ENCODE measurements at regions of chr5 and their contacts with region 1.

Region 1: GRCh38 chr5:142769741-142770631 is at the start of gene ARHGAP26:
- DNase-seq: peak; percentile 93
- ATAC-seq: peak; percentile 96
- H3K4me3 ChIP-seq: peak within 1 kb of the TSS; percentile 87 to 94 (median 94)
- H3K27ac ChIP-seq: peak within 1 kb of the TSS; percentile 62
- H3K4me1 ChIP-seq: peaks cover 44% of the 10 kb centered on the region
- H3K27me3 ChIP-seq: peaks cover 0 to 10% of the 10 kb centered on the region in 2 experiments; a peak in 3 of 5 replicates
- CTCF ChIP-seq: peak; percentile 72
- EP300 ChIP-seq: no peak
- POLR2A ChIP-seq: peak; percentile 81 to 92
- RAD21 ChIP-seq: peak; percentile 79
- total RNA-seq, gene ARHGAP26: 11.9 and 18.2 TPM in 2 replicates

Region 2: DNA sequence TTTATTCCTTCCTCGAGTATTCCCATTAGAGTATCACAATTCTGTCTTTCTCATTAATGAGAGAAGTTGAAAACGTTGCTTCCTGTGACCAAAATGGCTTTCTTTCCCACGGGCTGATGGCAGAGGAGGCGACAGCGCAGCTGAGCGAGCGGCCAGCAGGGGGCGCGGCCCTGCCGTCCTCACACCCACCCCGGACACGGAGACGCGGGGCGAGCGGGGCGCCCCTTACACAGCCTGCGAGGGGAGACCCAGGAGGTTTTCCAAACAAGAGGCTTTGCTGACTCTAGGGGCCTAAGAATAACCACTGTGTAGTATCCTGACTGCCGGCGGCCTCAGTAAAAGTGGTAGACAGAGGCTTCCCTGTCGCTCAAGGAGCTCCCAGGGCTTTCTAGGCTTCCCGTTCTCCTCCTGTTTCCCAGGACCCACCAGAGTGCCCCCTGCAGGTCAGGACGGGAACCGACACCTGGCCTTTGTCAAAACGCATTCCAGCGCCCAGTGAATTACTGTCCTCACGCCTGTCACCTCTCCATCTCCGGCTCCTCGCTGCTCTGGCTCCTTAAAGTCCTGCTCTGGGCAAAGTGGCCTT is 56.8 kb before region 1 on chr5:
- CTCF ChIA-PET with region 1: no interaction called
- POLR2A ChIA-PET with region 1: no interaction called
- in situ Hi-C with region 1: no loop called
- intact Hi-C with region 1: loop called (anchors 1 kb)
- DNase-seq: peak; percentile 81
- ATAC-seq: peak; percentile 94
- H3K4me3 ChIP-seq: peak overlapping the region; percentile 57 to 77 (median 69); a peak in 5 of 6 replicates
- H3K27ac ChIP-seq: no peak overlapping the region
- H3K4me1 ChIP-seq: peaks cover 18% of the 10 kb centered on the region
- H3K27me3 ChIP-seq: peaks cover 1 to 14% of the 10 kb centered on the region in 2 experiments; a peak in 4 of 5 replicates
- CTCF ChIP-seq: peak; percentile 89
- EP300 ChIP-seq: no peak
- POLR2A ChIP-seq: no peak
- RAD21 ChIP-seq: peak; percentile 71

Region 3: GRCh38 chr5:142807372-142807911 is 37.5 kb after region 1 on chr5:
- CTCF ChIA-PET with region 1: no interaction called
- POLR2A ChIA-PET with region 1: no interaction called
- in situ Hi-C with region 1: no loop called
- intact Hi-C with region 1: loop called (anchors 1 kb)
- DNase-seq: peak; percentile 97
- ATAC-seq: peak; percentile 96
- H3K4me3 ChIP-seq: peak overlapping the region in 2 of 3 experiments; percentile 27 to 32; a peak in 3 of 6 replicates
- H3K27ac ChIP-seq: peak overlapping the region; percentile 58
- H3K4me1 ChIP-seq: peaks cover 78% of the 10 kb centered on the region
- H3K27me3 ChIP-seq: no peaks in the 10 kb centered on the region
- CTCF ChIP-seq: no peak
- EP300 ChIP-seq: peak; percentile 84 to 96
- POLR2A ChIP-seq: no peak
- RAD21 ChIP-seq: peak; percentile 47

Region 4: GRCh38 chr5:142830241-142830989 is 60.4 kb after region 1 on chr5:
- CTCF ChIA-PET with region 1: no interaction called
- POLR2A ChIA-PET with region 1: interaction called, 12 read pairs
- in situ Hi-C with region 1: no loop called
- intact Hi-C with region 1: loop called (anchors 2 kb)
- DNase-seq: no peak
- ATAC-seq: no peak
- H3K4me3 ChIP-seq: no peak overlapping the region
- H3K27ac ChIP-seq: no peak overlapping the region
- H3K4me1 ChIP-seq: peaks cover 97% of the 10 kb centered on the region
- H3K27me3 ChIP-seq: no peaks in the 10 kb centered on the region
- CTCF ChIP-seq: no peak
- EP300 ChIP-seq: no peak
- POLR2A ChIP-seq: no peak
- RAD21 ChIP-seq: no peak

Region 5: GRCh38 chr5:142865414-142866045 is 95.5 kb after region 1 on chr5:
- CTCF ChIA-PET with region 1: interaction called, 19 read pairs
- POLR2A ChIA-PET with region 1: interaction called, 13 read pairs
- in situ Hi-C with region 1: loop called (anchors 5 kb)
- intact Hi-C with region 1: loop called (anchors 1 kb)
- DNase-seq: no peak
- ATAC-seq: no peak
- H3K4me3 ChIP-seq: no peak overlapping the region
- H3K27ac ChIP-seq: no peak overlapping the region
- H3K4me1 ChIP-seq: peaks cover 36% of the 10 kb centered on the region
- H3K27me3 ChIP-seq: no peaks in the 10 kb centered on the region
- CTCF ChIP-seq: no peak
- EP300 ChIP-seq: no peak
- POLR2A ChIP-seq: no peak
- RAD21 ChIP-seq: no peak

Region 6: DNA sequence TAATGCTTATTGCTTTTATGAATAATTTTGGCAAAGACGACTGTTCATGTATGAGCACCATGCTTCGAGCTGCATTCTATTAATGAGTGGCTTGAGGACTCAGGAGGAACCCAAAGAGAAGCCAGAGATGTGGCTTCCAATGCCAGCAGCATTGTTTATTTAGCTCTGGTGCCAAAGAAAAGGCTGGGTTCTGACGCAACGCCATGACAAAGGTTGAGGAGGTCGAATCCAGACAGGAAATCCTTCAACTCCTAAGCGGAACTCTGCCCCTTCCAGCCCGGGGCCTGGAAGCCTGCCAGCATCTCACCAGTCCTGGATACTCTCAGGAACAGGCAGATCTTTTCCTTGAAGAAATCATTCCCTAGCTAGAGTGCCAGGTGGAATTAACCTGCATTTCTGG is 104.6 kb after region 1 on chr5:
- CTCF ChIA-PET with region 1: interaction called, 4 read pairs
- POLR2A ChIA-PET with region 1: interaction called, 11 read pairs
- in situ Hi-C with region 1: loop called (anchors 5 kb)
- intact Hi-C with region 1: no loop called
- DNase-seq: peak; percentile 67
- ATAC-seq: peak; percentile 57
- H3K4me3 ChIP-seq: no peak overlapping the region
- H3K27ac ChIP-seq: no peak overlapping the region
- H3K4me1 ChIP-seq: peaks cover 49% of the 10 kb centered on the region
- H3K27me3 ChIP-seq: no peaks in the 10 kb centered on the region
- CTCF ChIP-seq: no peak
- EP300 ChIP-seq: peak in 1 of 2 experiments; percentile 40; a peak in 1 of 4 replicates
- POLR2A ChIP-seq: no peak
- RAD21 ChIP-seq: no peak

Region 7: DNA sequence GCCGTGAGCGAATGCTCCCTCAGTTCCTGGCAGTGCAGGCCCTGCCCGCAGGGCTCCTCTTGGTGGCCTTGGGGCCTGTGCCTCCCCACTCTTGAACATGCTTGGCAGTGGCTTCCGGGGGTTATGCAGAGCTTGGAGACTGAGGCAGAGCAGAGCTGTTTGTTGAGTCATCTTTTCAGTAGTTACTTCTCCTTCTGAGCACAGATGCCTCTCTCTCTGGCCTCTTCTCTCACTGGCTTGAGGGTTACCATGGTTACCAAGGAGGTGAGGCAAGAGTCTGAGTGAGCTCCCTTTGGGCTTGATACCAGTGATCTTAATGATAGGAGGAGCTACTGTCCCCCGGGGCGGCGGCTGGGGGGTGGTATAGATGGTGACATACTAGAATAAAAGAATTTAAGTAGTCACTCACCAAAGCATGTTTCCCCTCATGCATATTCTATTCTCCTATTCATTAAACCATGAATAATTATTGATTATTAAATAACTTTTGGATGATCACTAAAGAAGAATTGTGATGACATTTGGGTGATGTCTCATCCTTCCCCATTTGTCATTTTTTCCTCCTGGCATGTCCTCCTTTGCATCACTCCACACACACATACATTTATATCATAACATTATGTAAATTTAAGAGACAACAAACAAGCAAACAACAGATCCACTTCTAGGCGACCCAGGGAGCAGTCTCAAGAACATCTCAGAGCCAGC is 111.2 kb after region 1 on chr5:
- CTCF ChIA-PET with region 1: interaction called, 6 read pairs
- POLR2A ChIA-PET with region 1: no interaction called
- in situ Hi-C with region 1: no loop called
- intact Hi-C with region 1: loop called (anchors 1 kb)
- DNase-seq: no peak
- ATAC-seq: no peak
- H3K4me3 ChIP-seq: no peak overlapping the region
- H3K27ac ChIP-seq: no peak overlapping the region
- H3K4me1 ChIP-seq: 0 out of 2 replicates have a peak, but pooled peaks cover 7% of the 10 kb centered on the region
- H3K27me3 ChIP-seq: no peaks in the 10 kb centered on the region
- CTCF ChIP-seq: no peak
- EP300 ChIP-seq: no peak
- POLR2A ChIP-seq: no peak
- RAD21 ChIP-seq: no peak